Left ventricle myocardium inferior (tissue), 1 donor: ENCODE measurements at regions of chr2 and their contacts with region 1.

Region 1: GRCh38 chr2:191811807-191812602 is 34.9 kb downstream of the CAVIN2 start:
- DNase-seq: peak; percentile 33
- H3K4me3 ChIP-seq: peak overlapping the region; percentile 37
- H3K27ac ChIP-seq: no peak overlapping the region
- H3K4me1 ChIP-seq: peaks cover 4% of the 10 kb centered on the region
- H3K27me3 ChIP-seq: no peaks in the 10 kb centered on the region
- CTCF ChIP-seq: peak; percentile 88

Region 2: DNA sequence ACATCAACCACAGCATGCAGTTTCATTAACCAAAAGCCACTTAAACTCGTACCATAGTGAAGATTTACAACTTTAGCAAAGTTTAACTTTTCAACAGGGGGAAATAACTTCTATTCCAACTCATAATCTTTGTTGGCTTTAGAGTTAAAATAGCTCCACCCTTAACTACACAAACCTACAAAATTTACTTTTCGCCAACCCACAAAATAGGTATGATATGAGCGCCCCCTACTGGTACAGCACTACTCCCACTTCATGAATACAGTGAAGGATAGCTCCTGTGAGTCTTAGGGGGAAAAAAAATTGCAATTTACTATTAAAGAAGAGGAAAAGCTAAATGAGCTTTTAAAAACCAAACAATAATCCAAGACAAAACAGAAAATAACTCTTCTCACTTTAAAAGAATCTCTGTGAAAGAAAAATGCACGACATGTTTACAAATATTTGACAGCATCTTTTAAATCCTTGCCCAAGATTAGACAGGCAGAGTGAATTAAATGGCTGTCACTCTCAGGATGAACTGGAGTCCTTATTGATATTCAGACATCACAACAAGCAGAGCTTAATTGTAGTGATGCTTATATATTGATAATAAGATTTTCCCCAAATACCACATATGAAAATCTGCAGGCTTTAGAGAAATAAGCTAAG is 350.5 kb after region 1 on chr2:
- intact Hi-C with region 1: loop called (anchors 2 kb)
- DNase-seq: no peak
- H3K4me3 ChIP-seq: peak overlapping the region; percentile 49
- H3K27ac ChIP-seq: no peak overlapping the region
- H3K4me1 ChIP-seq: peaks cover 9% of the 10 kb centered on the region
- H3K27me3 ChIP-seq: peaks cover 11% of the 10 kb centered on the region
- CTCF ChIP-seq: peak; percentile 93